ENCODE measurements at regions of chr10 and their contacts with region 1.

Region 1: GRCh38 chr10:92024700-92025099 is 101.1 kb downstream of the BTAF1 start:
- H3K4me3 Mint-ChIP-seq: no peak overlapping the region
- H3K27ac Mint-ChIP-seq: no peak overlapping the region
- H3K4me1 Mint-ChIP-seq: no peaks in the 10 kb centered on the region
- H3K27me3 Mint-ChIP-seq: no peaks in the 10 kb centered on the region

Region 2: DNA sequence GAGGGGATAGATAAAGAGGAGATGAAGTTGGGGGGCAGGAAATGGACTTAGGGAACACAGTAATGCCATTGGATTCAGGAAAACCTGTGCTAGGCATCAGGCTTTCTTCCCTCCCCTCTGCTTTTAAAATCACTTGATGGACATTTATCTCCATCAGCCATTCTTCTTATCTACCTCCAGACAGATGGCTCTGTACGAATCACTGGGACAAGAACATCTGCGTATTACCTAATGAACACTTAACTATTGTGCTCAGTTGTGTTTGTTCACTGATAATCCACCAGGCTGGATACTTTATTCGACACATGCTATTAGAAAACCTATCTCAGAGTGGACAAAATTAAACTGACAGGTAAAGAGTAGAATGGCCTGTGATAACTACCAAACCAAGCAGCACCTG is 186.5 kb before region 1 on chr10:
- intact Hi-C with region 1: loop called (anchors 10 kb)
- H3K4me3 Mint-ChIP-seq: no peak overlapping the region
- H3K27ac Mint-ChIP-seq: no peak overlapping the region
- H3K4me1 Mint-ChIP-seq: no peaks in the 10 kb centered on the region
- H3K27me3 Mint-ChIP-seq: no peaks in the 10 kb centered on the region

Region 3: DNA sequence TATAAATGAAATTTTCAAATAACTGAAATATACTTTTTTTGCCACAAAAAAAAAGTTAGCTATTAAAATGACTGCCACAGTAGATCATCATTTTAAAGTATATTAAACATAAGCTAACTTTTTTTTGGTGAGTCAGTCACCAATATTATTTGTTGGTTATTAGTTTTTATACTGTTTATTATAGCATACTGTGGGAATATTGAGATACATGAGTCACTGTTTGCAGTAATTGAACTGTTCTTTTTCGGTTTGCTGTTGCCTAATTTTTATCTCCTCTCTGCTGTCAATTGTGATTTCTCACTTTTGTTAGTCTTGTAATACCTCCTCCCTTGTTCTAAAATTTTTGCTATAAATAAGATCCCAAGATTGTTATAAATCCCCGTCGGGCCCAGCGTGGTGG is 55.4 kb before region 1 on chr10:
- intact Hi-C with region 1: no loop called
- H3K4me3 Mint-ChIP-seq: no peak overlapping the region
- H3K27ac Mint-ChIP-seq: no peak overlapping the region
- H3K4me1 Mint-ChIP-seq: no peaks in the 10 kb centered on the region
- H3K27me3 Mint-ChIP-seq: no peaks in the 10 kb centered on the region

Measured in dendritic cell treated with granulocyte-macrophage colony-stimulating factor and Interleukin-4, amounts not matched to agents 40 ng/mL and 50 ng/mL, for 4 days (primary cell).